ENCODE measurements at regions of chr1 and their contacts with region 1.

Region 1: GRCh38 chr1:24705260-24706073 is 39.8 kb upstream of the CLIC4 start:
- DNase-seq: peak; percentile 97
- H3K4me3 ChIP-seq: peak overlapping the region in 1 of 3 experiments; percentile 12
- H3K27ac ChIP-seq: peak overlapping the region; percentile 76
- H3K4me1 ChIP-seq: peaks cover 19% of the 10 kb centered on the region
- H3K27me3 ChIP-seq: no peaks in the 10 kb centered on the region
- CTCF ChIP-seq: no peak
- POLR2A ChIP-seq: peak; percentile 62

Region 2: DNA sequence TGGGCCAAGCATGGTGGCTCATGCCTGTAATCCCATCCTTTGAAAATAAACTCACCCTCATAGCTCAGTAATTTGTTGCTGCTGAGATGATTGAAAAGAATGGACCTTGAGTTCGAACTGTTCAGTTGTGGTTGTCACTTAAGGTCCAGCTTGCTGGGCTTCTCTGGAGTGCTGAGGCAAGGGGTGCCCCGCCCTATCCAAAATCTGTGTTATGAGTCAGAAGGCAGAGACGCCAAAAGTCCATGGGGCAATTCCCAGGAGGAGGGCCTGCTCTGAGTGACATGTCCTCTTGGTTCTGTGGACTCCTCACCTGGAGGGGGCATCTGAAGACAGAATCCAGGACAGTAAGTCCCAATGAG is 658.4 kb before region 1 on chr1:
- CTCF ChIA-PET with region 1: no interaction called
- POLR2A ChIA-PET with region 1: no interaction called
- dilution Hi-C with region 1: no loop called
- intact Hi-C with region 1: no loop called
- DNase-seq: no peak
- H3K4me3 ChIP-seq: no peak overlapping the region
- H3K27ac ChIP-seq: no peak overlapping the region
- H3K4me1 ChIP-seq: peaks cover 2% of the 10 kb centered on the region
- H3K27me3 ChIP-seq: peaks cover 0 to 4% of the 10 kb centered on the region in 2 experiments
- CTCF ChIP-seq: no peak
- POLR2A ChIP-seq: no peak

Region 3: DNA sequence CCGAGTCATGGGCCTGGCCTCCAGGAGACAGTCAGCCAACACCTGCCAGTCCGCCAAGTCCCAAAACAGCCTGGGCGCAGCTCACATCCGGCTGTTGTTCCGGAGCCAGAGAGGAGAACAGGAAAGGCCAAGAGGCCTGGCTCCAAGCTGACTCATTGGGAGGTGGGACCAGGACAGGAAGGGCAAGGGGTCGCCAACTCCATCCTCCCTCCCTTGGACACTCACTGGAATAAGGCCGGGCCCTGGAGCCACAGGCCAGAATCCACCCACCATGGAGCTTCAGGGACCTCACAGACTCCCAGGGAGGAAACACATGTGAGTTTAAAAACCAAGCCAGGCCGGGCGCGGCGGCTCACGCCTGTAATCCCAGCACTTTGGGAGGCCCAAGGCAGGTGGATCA is 14.7 kb after region 1 on chr1:
- CTCF ChIA-PET with region 1: interaction called, 4 read pairs
- POLR2A ChIA-PET with region 1: interaction called, 6 read pairs
- dilution Hi-C with region 1: no loop called
- intact Hi-C with region 1: loop called (anchors 1 kb)
- DNase-seq: peak; percentile 96
- H3K4me3 ChIP-seq: no peak overlapping the region
- H3K27ac ChIP-seq: peak overlapping the region; percentile 85
- H3K4me1 ChIP-seq: peaks cover 27% of the 10 kb centered on the region
- H3K27me3 ChIP-seq: no peaks in the 10 kb centered on the region
- CTCF ChIP-seq: no peak
- POLR2A ChIP-seq: peak; percentile 65

Region 4: DNA sequence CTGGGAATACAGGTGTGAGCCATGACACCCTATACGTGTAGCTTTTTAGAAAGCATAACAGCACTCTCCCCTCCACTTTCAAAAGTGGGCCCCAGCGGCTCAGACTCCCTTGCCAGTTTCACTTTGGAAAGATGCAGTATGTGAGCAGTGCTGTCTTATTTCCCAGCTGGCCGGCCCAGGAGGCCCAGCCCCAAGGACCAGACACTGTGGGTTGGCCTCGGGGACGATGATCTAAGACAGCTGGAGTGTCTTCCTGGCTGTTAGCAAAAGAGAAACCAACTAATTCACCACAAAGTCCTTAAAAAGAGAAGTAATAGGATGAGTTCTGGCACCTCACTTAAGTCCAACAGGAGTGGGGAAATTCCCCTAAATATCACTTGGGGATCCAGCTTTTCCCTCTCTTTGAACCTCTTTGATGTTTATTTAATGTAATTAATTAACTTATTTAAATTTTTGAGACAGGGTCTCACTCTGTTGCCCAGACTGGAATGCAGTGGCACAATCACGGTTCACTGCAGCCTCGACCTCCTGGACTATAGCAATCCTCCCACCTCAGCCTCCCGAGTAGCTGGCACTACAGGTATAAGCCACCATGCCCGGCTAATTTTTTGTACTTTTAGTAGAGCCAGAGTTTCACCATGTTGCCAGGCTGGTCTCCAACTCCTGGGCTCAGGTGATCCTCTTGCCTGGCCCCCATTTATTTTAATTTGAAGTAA is 22.2 kb after region 1 on chr1:
- CTCF ChIA-PET with region 1: interaction called, 4 read pairs
- POLR2A ChIA-PET with region 1: interaction called, 4 read pairs
- dilution Hi-C with region 1: no loop called
- intact Hi-C with region 1: loop called (anchors 1 kb)
- DNase-seq: no peak
- H3K4me3 ChIP-seq: no peak overlapping the region
- H3K27ac ChIP-seq: no peak overlapping the region
- H3K4me1 ChIP-seq: peaks cover 45% of the 10 kb centered on the region
- H3K27me3 ChIP-seq: no peaks in the 10 kb centered on the region
- CTCF ChIP-seq: no peak
- POLR2A ChIP-seq: no peak

Region 5: DNA sequence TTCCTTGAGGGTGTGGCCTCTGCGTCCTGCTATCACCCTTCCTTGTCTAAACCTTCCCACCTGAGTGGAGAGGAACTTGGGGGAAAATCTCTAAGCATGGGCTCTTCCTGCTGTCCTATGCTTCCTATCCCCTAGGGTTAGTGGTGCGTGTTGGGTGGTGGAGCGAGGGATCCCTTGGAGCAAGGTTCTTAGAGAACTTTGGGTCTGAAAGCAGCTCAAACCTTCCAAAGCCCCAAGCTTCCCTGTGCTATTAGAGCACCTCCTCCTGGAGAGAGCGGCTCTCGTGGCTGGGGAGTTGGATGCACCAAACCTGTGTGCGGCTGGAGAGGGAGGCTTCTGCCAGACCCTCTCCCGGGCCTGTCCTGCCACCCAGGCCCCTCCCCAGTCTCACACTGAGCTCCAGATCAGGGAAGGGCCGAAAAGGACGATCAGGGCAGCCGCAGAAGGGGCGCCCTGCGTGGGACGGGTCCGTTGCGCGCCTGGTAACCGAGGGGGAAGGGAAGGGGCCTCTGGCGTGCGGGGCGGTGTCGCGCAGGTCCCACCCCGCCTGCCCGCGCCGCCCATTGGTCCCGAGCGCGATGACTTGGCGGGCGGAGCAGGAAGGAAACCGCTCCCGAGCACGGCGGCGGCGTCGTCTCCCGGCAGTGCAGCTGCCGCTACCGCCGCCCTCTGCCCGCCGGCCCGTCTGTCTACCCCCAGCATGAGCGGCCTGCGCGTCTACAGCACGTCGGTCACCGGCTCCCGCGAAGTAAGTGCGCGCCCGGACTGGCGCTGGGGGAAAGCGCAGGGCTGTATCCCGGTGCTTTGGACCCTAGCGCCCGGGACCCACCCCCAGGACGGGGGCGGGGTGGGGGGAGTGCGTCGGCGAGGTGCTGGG is 1574.2 kb after region 1 on chr1 and contains the start of gene SH3BGRL3:
- CTCF ChIA-PET with region 1: no interaction called
- POLR2A ChIA-PET with region 1: no interaction called
- dilution Hi-C with region 1: no loop called
- intact Hi-C with region 1: no loop called
- DNase-seq: peak; percentile 89
- H3K4me3 ChIP-seq: peak within 1 kb of the TSS; percentile 54 to 95 (median 69)
- H3K27ac ChIP-seq: peak within 1 kb of the TSS; percentile 82
- H3K4me1 ChIP-seq: peaks cover 52% of the 10 kb centered on the region
- H3K27me3 ChIP-seq: no peaks in the 10 kb centered on the region
- CTCF ChIP-seq: peak; percentile 50 to 69
- POLR2A ChIP-seq: peak; percentile 97
- total RNA-seq, gene SH3BGRL3: 337 and 344 TPM in 2 replicates

Measured in endothelial cell of umbilical vein (primary cell).